Transverse colon (tissue), 4 donors: ENCODE measurements at regions of chr12 and their contacts with region 1.

Region 1: GRCh38 chr12:54958048-54958658 is 26.4 kb downstream of the TESPA1 start:
- DNase-seq: peak; percentile 29
- H3K4me3 ChIP-seq: no peak overlapping the region
- H3K27ac ChIP-seq: no peak overlapping the region
- H3K4me1 ChIP-seq: no peaks in the 10 kb centered on the region
- H3K27me3 ChIP-seq: peaks cover 12% of the 10 kb centered on the region
- CTCF ChIP-seq: peak; percentile 60 to 64 (median 61)
- EP300 ChIP-seq: no peak
- POLR2A ChIP-seq: no peak

Region 2: DNA sequence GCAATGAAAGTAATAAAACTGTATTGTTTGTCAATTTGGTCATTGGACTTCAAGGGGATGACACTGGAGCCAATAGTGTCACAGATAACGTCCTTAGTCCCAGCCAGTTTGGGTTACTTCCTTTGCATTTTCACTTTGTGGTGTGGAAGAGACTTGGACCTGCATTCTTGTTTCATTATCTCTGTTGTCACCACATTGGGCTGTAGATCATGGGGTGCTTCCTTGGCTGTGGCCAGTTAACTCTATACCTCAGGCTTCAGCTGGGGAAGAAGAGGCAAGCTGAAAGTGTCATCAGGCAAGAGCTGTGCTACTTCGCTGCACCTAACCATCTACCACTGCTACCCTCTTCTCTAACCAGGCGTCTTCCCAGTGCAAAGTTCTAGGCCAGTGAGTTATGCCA is 1191.3 kb before region 1 on chr12:
- in situ Hi-C with region 1: no loop called
- intact Hi-C with region 1: no loop called
- DNase-seq: no peak
- H3K4me3 ChIP-seq: no peak overlapping the region
- H3K27ac ChIP-seq: no peak overlapping the region
- H3K4me1 ChIP-seq: no peaks in the 10 kb centered on the region
- H3K27me3 ChIP-seq: peaks cover 94% of the 10 kb centered on the region
- CTCF ChIP-seq: no peak
- EP300 ChIP-seq: no peak
- POLR2A ChIP-seq: no peak

Region 3: DNA sequence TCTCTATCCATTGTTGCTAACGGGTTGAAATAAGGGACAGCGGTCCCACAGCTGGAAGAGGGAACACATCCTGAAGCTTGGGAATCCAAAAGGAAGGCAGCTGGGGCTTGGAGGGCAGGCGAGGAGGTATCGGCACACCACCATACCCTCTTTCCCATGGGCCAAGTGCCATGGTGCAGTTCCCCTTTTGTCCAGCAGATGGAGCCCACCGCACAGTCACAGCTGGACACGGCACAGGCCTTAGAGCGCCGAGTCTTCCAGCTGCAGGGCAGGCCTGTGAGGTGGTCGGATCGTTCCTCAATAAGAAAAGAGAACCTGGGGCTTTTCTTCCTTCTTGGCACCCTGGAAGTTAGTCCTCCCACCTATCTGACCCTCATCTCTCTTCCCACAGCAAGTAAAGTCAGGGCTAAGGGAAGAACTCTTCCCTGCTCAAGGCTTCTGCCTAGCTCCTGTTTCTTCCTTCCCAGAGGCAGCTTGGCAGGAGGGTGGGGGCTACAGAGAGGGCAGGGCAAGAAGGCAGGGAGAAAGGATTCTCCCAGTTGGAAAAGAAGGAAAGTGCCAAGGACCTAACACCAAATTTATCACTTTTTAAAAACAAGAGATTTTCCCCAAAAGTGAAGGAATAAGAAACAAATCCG is 378.3 kb before region 1 on chr12:
- in situ Hi-C with region 1: loop called in 1 of 4 experiments (anchors 25 kb)
- intact Hi-C with region 1: no loop called
- DNase-seq: peak; percentile 88
- H3K4me3 ChIP-seq: no peak overlapping the region
- H3K27ac ChIP-seq: no peak overlapping the region
- H3K4me1 ChIP-seq: peaks cover 0 to 5% (median 0%) of the 10 kb centered on the region in 4 donors
- H3K27me3 ChIP-seq: no peaks in the 10 kb centered on the region
- CTCF ChIP-seq: peak; percentile 95 to 100 (median 99)
- EP300 ChIP-seq: no peak
- POLR2A ChIP-seq: no peak

Region 4: DNA sequence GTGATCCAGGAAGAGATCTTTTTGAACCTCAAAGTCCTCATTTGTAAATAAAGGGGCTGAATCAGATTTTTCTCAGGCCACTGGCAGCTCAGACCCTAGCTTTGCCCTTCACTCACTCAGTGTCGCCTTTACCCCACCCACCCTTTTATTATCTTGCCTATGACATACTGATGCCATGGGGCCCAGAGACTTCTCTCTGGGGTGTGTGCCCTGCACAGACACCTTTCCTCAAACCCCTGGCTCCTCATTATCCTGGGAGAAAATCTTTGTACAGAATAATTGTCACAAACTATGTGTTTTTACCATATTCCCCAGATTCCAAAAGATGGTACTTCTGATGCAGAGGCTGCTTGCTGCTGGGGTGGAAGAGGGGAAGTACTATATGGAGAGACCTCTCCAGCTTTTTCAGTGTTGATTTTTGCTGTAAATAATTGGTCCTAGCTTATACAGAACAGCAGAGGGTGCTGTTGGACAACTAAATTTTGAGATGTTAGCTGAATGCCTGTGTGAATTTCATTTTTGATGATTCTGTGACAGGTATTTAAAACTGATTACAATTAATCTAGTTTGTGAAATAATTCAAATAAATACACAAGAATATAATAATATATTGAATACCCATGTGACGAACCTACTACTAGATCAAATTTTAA is 256.1 kb before region 1 on chr12:
- in situ Hi-C with region 1: no loop called
- intact Hi-C with region 1: loop called (anchors 10 kb)
- DNase-seq: no peak
- H3K4me3 ChIP-seq: no peak overlapping the region
- H3K27ac ChIP-seq: no peak overlapping the region
- H3K4me1 ChIP-seq: no peaks in the 10 kb centered on the region
- H3K27me3 ChIP-seq: no peaks in the 10 kb centered on the region
- CTCF ChIP-seq: peak; percentile 37 to 61 (median 53)
- EP300 ChIP-seq: no peak
- POLR2A ChIP-seq: no peak

Region 5: GRCh38 chr12:54749191-54749818 is 208.8 kb before region 1 on chr12:
- in situ Hi-C with region 1: loop called (anchors 10 kb)
- intact Hi-C with region 1: no loop called
- DNase-seq: no peak
- H3K4me3 ChIP-seq: no peak overlapping the region
- H3K27ac ChIP-seq: no peak overlapping the region
- H3K4me1 ChIP-seq: no peaks in the 10 kb centered on the region
- H3K27me3 ChIP-seq: no peaks in the 10 kb centered on the region
- CTCF ChIP-seq: peak; percentile 53 to 71 (median 63)
- EP300 ChIP-seq: no peak
- POLR2A ChIP-seq: no peak

Region 6: GRCh38 chr12:54759751-54760150 is 198.4 kb before region 1 on chr12:
- in situ Hi-C with region 1: loop called in 1 of 4 experiments (anchors 10 kb)
- intact Hi-C with region 1: no loop called
- DNase-seq: no peak
- H3K4me3 ChIP-seq: no peak overlapping the region
- H3K27ac ChIP-seq: no peak overlapping the region
- H3K4me1 ChIP-seq: no peaks in the 10 kb centered on the region
- H3K27me3 ChIP-seq: no peaks in the 10 kb centered on the region
- CTCF ChIP-seq: no peak
- EP300 ChIP-seq: no peak
- POLR2A ChIP-seq: no peak

Region 7: DNA sequence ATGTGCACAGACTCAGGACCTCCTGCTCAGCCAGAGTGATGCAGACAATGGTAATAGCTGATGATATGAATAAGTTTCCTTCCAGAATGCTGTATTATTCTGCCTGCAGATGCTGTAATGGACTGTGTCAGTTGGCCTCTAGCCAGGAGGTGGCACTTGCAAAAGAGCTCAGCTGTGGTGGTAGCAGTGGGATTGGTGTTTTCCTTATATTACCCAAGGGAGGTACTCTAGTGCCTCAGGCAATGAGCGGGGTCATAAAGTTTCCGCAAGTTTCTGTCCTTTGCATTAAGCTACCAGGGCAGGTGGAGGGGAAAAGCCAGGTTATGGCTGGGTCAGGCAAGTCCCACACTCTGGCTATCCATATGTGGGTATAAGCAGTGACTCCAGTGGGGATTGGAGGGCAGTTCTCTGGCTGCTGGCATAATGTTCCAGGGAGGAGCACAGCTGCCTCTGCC is 117.8 kb before region 1 on chr12:
- in situ Hi-C with region 1: loop called in 1 of 4 experiments (anchors 10 kb)
- intact Hi-C with region 1: no loop called
- DNase-seq: no peak
- H3K4me3 ChIP-seq: no peak overlapping the region
- H3K27ac ChIP-seq: no peak overlapping the region
- H3K4me1 ChIP-seq: no peaks in the 10 kb centered on the region
- H3K27me3 ChIP-seq: no peaks in the 10 kb centered on the region
- CTCF ChIP-seq: no peak
- EP300 ChIP-seq: no peak
- POLR2A ChIP-seq: no peak

Region 8: GRCh38 chr12:54853995-54854566 is 104.1 kb before region 1 on chr12 and contains the start of gene MUCL1:
- in situ Hi-C with region 1: loop called in 2 of 4 experiments (anchors 10 kb)
- intact Hi-C with region 1: no loop called
- DNase-seq: peak; percentile 58
- H3K4me3 ChIP-seq: no peak within 1 kb of the TSS
- H3K27ac ChIP-seq: no peak within 1 kb of the TSS
- H3K4me1 ChIP-seq: no peaks in the 10 kb centered on the region
- H3K27me3 ChIP-seq: no peaks in the 10 kb centered on the region
- CTCF ChIP-seq: peak; percentile 55 to 80 (median 72)
- EP300 ChIP-seq: no peak
- POLR2A ChIP-seq: no peak
- total RNA-seq, gene MUCL1: not detected